Activated CD8-positive, alpha-beta T cell treated with anti-CD3 and anti-CD28 coated beads for 36 hours (primary cell): ENCODE measurements at regions of chr19 and their contacts with region 1.

Region 1: GRCh38 chr19:13277104-13277809 is 127.0 kb downstream of the IER2 start:
- DNase-seq: peak; percentile 78
- ATAC-seq: peak; percentile 94
- H3K4me3 Mint-ChIP-seq: peak overlapping the region; percentile 26
- H3K27ac Mint-ChIP-seq: peak overlapping the region; percentile 80
- H3K4me1 Mint-ChIP-seq: peaks cover 10% of the 10 kb centered on the region
- H3K27me3 Mint-ChIP-seq: peaks cover 4% of the 10 kb centered on the region
- CTCF ChIP-seq: peak; percentile 66

Region 2: DNA sequence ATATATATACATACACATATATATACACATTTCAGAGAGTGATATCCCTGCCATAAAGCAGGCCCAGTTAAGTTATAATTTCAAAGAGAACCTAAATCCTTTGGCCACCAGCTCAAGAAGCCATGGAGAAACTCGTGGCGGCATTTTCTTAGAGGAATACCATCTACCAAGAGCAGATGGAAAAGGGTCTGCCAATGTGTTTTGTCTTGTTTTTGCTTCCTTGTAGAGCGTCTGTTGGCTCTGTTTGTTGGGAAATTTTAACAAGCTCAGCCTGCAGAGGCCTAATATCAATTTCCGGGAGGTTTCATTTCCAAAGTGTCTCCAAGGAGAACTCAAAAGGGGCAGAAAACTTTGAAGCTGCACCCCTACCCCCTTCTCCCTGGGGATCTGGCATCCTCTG is 13.5 kb after region 1 on chr19:
- CTCF ChIA-PET with region 1: interaction called, 11 read pairs
- POLR2A ChIA-PET with region 1: no interaction called
- intact Hi-C with region 1: no loop called
- DNase-seq: no peak
- ATAC-seq: no peak
- H3K4me3 Mint-ChIP-seq: no peak overlapping the region
- H3K27ac Mint-ChIP-seq: no peak overlapping the region
- H3K4me1 Mint-ChIP-seq: no peaks in the 10 kb centered on the region
- H3K27me3 Mint-ChIP-seq: peaks cover 2% of the 10 kb centered on the region
- CTCF ChIP-seq: no peak

Region 3: DNA sequence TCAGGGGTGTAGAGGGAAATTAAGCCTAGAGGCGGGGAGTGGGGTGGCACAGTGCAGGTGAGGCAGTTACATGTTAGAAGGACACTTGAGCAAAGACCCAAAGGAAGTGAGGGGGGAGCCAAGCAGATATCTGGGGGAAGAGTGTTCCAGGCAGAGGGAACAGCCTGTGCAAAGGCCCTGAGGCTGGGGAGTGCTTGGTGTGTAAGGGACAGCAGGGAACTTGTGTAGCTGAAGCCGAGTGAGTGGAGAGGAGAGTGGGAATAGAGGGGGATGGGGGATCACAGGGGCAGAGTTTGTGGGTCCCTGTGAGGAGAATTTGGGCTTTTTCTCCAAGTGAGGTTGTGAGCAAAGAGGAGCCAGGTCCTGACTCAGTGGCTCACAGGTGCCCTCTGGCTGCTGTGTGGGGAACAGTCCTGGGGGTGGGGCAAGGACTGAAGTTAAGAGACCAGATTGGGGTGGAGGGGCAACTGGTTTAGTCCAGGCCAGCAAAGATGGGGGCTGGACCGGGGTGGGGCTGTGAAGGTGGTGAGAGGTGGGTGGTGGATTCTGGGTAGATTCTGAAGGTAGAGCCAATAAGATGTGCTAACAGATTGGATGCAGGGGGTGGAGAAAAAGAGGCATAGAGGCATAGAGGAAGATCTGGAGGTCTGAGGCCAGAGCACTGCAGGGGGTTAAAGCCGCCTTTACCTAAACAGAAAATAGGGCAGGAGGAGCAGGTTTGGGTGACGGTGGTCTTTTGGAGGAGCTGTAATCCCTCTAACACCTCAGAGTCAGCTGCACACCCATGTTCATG is 153.7 kb after region 1 on chr19:
- CTCF ChIA-PET with region 1: interaction called, 18 read pairs
- POLR2A ChIA-PET with region 1: no interaction called
- intact Hi-C with region 1: loop called (anchors 1 kb)
- DNase-seq: peak; percentile 73
- ATAC-seq: peak; percentile 60
- H3K4me3 Mint-ChIP-seq: no peak overlapping the region
- H3K27ac Mint-ChIP-seq: no peak overlapping the region
- H3K4me1 Mint-ChIP-seq: no peaks in the 10 kb centered on the region
- H3K27me3 Mint-ChIP-seq: peaks cover 17% of the 10 kb centered on the region
- CTCF ChIP-seq: peak; percentile 63